Endothelial cell of umbilical vein (primary cell): ENCODE measurements at regions of chr18 and their contacts with region 1.

Region 1: DNA sequence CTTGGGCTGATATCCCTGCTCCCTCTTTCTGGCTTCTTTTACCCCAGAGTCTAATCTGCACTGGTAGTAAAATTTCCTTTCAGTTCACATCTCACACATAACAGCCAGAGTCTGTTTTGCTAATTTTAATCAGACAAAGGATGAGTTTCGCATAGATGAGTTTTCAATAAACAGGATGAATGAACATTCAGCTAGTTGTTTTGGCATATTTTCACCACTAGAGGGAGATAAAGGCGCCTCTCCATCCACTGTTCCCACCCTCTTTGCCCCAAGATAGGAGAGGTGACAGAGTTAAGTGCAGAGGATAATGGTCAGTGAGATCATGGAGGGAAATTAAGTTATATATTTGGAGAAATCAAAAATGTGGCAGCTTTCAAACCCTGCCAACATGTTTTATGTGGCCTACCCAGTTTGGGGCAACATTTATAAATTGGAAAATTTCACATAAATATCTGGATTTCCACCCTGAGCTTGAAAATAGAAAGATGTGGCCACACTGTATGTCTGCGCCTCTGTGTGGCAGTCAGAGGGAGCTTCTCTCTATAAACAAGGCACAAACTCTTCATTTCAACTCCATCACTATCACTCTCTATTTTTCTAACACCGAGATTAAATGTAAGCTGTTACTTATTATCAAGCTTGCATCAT is 48.5 kb upstream of the DTNA start:
- DNase-seq: peak; percentile 62
- H3K4me3 ChIP-seq: no peak overlapping the region
- H3K27ac ChIP-seq: no peak overlapping the region
- H3K4me1 ChIP-seq: peaks cover 21% of the 10 kb centered on the region
- H3K27me3 ChIP-seq: no peaks in the 10 kb centered on the region
- CTCF ChIP-seq: peak; percentile 73 to 75
- POLR2A ChIP-seq: no peak

Region 2: GRCh38 chr18:34352385-34353163 is 309.0 kb before region 1 on chr18:
- CTCF ChIA-PET with region 1: interaction called, 17 read pairs
- POLR2A ChIA-PET with region 1: no interaction called
- dilution Hi-C with region 1: no loop called
- intact Hi-C with region 1: no loop called
- DNase-seq: peak; percentile 35
- H3K4me3 ChIP-seq: no peak overlapping the region
- H3K27ac ChIP-seq: no peak overlapping the region
- H3K4me1 ChIP-seq: no peaks in the 10 kb centered on the region
- H3K27me3 ChIP-seq: no peaks in the 10 kb centered on the region
- CTCF ChIP-seq: no peak
- POLR2A ChIP-seq: no peak

Region 3: GRCh38 chr18:34592961-34593382 is 68.6 kb before region 1 on chr18:
- CTCF ChIA-PET with region 1: interaction called, 31 read pairs
- POLR2A ChIA-PET with region 1: no interaction called
- dilution Hi-C with region 1: no loop called
- intact Hi-C with region 1: loop called (anchors 1 kb)
- DNase-seq: peak; percentile 69
- H3K4me3 ChIP-seq: peak overlapping the region in 2 of 3 experiments; percentile 36 to 43
- H3K27ac ChIP-seq: no peak overlapping the region
- H3K4me1 ChIP-seq: peaks cover 2% of the 10 kb centered on the region
- H3K27me3 ChIP-seq: no peaks in the 10 kb centered on the region
- CTCF ChIP-seq: no peak
- POLR2A ChIP-seq: no peak

Region 4: DNA sequence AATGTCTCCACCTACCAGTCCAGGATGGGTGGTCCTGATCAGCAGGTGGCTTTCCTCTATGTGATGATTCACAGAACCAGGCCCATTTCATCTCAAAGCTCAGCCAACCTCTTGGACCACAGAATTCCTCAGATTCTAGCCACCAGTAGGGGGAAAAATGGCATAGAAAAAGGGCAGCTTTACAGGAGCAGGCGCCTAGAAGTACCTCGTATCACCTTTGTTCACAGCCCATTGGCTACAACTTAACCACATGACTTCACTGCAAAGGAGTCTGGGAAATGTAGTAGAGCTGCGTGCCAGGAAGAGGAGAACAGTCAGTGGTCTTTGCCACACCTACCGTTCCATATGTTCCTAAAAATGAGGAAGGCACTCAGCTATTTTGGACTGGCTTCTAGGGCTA is 14.3 kb before region 1 on chr18:
- CTCF ChIA-PET with region 1: interaction called, 64 read pairs
- POLR2A ChIA-PET with region 1: no interaction called
- dilution Hi-C with region 1: no loop called
- intact Hi-C with region 1: no loop called
- DNase-seq: no peak
- H3K4me3 ChIP-seq: no peak overlapping the region
- H3K27ac ChIP-seq: no peak overlapping the region
- H3K4me1 ChIP-seq: no peaks in the 10 kb centered on the region
- H3K27me3 ChIP-seq: no peaks in the 10 kb centered on the region
- CTCF ChIP-seq: no peak
- POLR2A ChIP-seq: no peak

Region 5: GRCh38 chr18:34707670-34708069 is 46.1 kb after region 1 on chr18:
- CTCF ChIA-PET with region 1: interaction called, 61 read pairs
- POLR2A ChIA-PET with region 1: no interaction called
- dilution Hi-C with region 1: no loop called
- intact Hi-C with region 1: loop called (anchors 2 kb)
- DNase-seq: peak; percentile 92
- H3K4me3 ChIP-seq: peak overlapping the region in 1 of 3 experiments; percentile 32
- H3K27ac ChIP-seq: peak overlapping the region; percentile 52
- H3K4me1 ChIP-seq: peaks cover 25% of the 10 kb centered on the region
- H3K27me3 ChIP-seq: no peaks in the 10 kb centered on the region
- CTCF ChIP-seq: no peak
- POLR2A ChIP-seq: no peak

Region 6: DNA sequence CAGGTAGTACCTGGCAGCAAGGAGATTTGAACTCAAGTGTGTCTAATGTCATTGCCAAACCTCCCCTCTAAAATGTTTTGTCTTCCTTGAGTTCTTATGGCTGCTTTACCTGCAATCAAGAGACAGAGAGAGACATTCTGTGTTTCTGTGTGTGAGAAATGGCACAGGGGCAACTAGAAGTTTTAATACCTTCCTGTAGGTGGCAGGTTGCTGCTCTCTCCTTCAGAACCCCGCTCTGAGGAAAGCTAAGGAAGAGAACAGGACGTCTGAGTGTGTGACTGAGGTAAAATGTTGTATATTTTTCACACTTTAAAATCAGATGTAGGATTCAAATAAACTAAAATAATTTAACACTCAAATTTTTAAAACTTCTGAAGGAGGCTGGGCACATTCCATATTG is 67.7 kb after region 1 on chr18:
- CTCF ChIA-PET with region 1: interaction called, 28 read pairs
- POLR2A ChIA-PET with region 1: no interaction called
- dilution Hi-C with region 1: no loop called
- intact Hi-C with region 1: loop called (anchors 5 kb)
- DNase-seq: peak; percentile 24
- H3K4me3 ChIP-seq: no peak overlapping the region
- H3K27ac ChIP-seq: no peak overlapping the region
- H3K4me1 ChIP-seq: no peaks in the 10 kb centered on the region
- H3K27me3 ChIP-seq: no peaks in the 10 kb centered on the region
- CTCF ChIP-seq: peak; percentile 23 to 47
- POLR2A ChIP-seq: no peak

Region 7: DNA sequence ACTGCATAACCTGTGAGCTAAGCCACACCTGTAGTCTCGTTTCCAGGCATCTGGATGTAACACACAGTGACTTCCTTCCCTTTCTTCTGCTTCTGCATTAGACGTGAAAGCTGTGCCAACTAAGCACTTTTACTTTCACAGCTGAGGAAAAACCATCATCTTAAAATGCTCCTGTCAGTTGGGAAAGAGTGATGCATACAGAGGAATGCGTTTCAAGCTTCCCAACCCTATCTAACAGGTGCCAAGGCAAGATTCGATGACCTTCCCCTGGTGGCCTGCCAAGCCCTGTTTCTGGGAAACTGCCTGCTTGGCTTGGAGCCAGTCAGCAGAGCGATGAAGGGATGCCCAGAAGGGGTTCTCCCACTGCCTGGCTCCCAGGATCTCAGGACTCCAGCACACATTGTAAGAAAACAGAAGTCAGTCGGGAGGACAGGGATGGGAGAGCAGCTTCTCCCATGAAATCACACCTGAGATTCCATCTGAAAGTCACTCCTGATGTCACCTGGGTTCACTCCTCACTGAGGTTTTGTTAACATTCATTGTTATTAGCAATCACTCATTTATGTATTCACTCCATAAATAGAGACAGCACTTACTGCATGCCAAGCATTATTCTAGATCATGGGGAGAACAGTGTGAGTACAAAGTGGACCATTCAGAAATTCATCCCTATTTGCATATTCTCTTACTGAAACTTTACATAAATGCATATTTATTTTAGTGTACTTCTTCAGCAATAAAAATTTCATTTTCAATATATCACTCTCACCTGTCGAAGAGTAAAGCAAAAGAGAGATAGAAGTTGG is 112.6 kb after region 1 on chr18:
- CTCF ChIA-PET with region 1: interaction called, 30 read pairs
- POLR2A ChIA-PET with region 1: no interaction called
- dilution Hi-C with region 1: no loop called
- intact Hi-C with region 1: loop called (anchors 5 kb)
- DNase-seq: peak; percentile 83
- H3K4me3 ChIP-seq: no peak overlapping the region
- H3K27ac ChIP-seq: peak overlapping the region; percentile 57
- H3K4me1 ChIP-seq: peaks cover 22% of the 10 kb centered on the region
- H3K27me3 ChIP-seq: no peaks in the 10 kb centered on the region
- CTCF ChIP-seq: no peak
- POLR2A ChIP-seq: no peak

Region 8: DNA sequence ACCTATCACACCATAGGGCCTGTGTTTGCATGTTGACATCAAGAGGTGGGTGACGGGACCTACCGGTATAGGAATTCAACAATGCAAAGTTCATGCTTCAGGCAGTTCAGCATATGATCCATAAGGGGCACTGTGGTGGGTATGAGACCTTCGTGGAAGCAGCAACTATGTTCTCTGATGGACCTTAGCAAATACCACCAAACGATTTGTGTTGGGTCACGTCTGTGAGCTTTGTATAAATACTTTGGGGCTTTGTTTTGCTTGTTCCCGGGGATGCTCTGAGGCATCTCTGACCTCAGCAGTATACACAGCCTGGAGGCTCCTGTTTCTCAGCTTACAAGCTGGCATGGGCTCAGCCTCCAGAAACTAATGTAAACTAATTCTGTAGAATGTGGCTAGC is 160.2 kb after region 1 on chr18:
- CTCF ChIA-PET with region 1: no interaction called
- POLR2A ChIA-PET with region 1: no interaction called
- dilution Hi-C with region 1: no loop called
- intact Hi-C with region 1: no loop called
- DNase-seq: no peak
- H3K4me3 ChIP-seq: no peak overlapping the region
- H3K27ac ChIP-seq: no peak overlapping the region
- H3K4me1 ChIP-seq: no peaks in the 10 kb centered on the region
- H3K27me3 ChIP-seq: no peaks in the 10 kb centered on the region
- CTCF ChIP-seq: no peak
- POLR2A ChIP-seq: no peak